CD14-positive monocyte (primary cell): ENCODE measurements at regions of chr17 and their contacts with region 1.

Region 1: GRCh38 chr17:39429600-39429999 is 21.5 kb downstream of the MED1 start:
- DNase-seq: no peak
- H3K4me3 ChIP-seq: no peak overlapping the region
- H3K4me3 Mint-ChIP-seq: no peak overlapping the region
- H3K27ac ChIP-seq: no peak overlapping the region
- H3K27ac Mint-ChIP-seq: no peak overlapping the region
- H3K4me1 ChIP-seq: no peaks in the 10 kb centered on the region
- H3K4me1 Mint-ChIP-seq: no peaks in the 10 kb centered on the region
- H3K27me3 ChIP-seq: no peaks in the 10 kb centered on the region
- H3K27me3 Mint-ChIP-seq: peaks cover 0 to 1% (median 0%) of the 10 kb centered on the region in 3 donors
- CTCF ChIP-seq: no peak

Region 2: DNA sequence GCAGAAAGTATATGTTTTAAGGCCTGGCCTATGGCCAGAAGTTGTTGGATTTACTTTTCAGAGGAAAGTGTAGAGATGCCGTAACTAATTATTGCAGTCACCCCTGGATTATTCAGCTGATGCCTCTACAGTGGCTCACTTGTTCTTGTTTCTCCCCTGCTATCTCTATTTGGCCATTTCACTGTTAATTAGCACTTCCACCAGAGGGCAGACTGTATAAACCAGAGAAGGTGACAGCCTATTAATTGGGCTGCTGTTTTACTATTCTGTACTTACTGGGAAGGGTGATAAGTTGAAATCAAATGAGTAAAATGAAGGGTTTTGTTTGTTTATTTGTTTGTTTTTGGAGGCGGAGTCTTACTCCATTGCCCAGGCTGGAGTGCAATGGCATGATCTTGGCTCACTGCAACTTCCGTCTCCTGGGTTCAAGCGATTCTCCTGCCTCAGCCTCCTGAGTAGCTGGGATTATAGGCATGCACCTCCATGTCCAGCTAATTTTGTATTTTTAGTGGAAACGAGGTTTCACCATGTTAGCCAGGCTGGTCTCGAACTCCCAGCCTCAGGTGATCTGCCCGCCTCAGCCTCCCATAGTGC is 97.7 kb after region 1 on chr17:
- intact Hi-C with region 1: loop called in 1 of 2 experiments (anchors 10 kb)
- DNase-seq: no peak
- H3K4me3 ChIP-seq: no peak overlapping the region
- H3K4me3 Mint-ChIP-seq: no peak overlapping the region
- H3K27ac ChIP-seq: no peak overlapping the region
- H3K27ac Mint-ChIP-seq: no peak overlapping the region
- H3K4me1 ChIP-seq: peaks cover under 1 to 2% of the 10 kb centered on the region in 2 donors
- H3K4me1 Mint-ChIP-seq: no peaks in the 10 kb centered on the region
- H3K27me3 ChIP-seq: no peaks in the 10 kb centered on the region
- H3K27me3 Mint-ChIP-seq: no peaks in the 10 kb centered on the region
- CTCF ChIP-seq: peak; percentile 42